Activated T-helper 2 cell treated with anti-CD3 and anti-CD28 coated beads, Interferon-gamma antibody, Interleukin-2, Interleukin-4, amounts not matched to agents 10 μg/mL and 5 μg/mL and 100 μg/mL, durations not matched to agents 14 hours and 24 hours and 36 hours (primary cell): ENCODE measurements at regions of chr1 and their contacts with region 1.

Region 1: GRCh38 chr1:164786980-164787833 is 228.2 kb downstream of the PBX1 start:
- DNase-seq: peak; percentile 41
- H3K4me3 Mint-ChIP-seq: no peak overlapping the region
- H3K27ac Mint-ChIP-seq: no peak overlapping the region
- H3K4me1 Mint-ChIP-seq: no peaks in the 10 kb centered on the region
- H3K27me3 Mint-ChIP-seq: peaks cover 3% of the 10 kb centered on the region

Region 2: GRCh38 chr1:163410073-163410999 is 1376.9 kb before region 1 on chr1:
- intact Hi-C with region 1: loop called (anchors 2 kb)
- DNase-seq: peak; percentile 12
- H3K4me3 Mint-ChIP-seq: no peak overlapping the region
- H3K27ac Mint-ChIP-seq: no peak overlapping the region
- H3K4me1 Mint-ChIP-seq: peaks cover 4% of the 10 kb centered on the region
- H3K27me3 Mint-ChIP-seq: no peaks in the 10 kb centered on the region

Region 3: DNA sequence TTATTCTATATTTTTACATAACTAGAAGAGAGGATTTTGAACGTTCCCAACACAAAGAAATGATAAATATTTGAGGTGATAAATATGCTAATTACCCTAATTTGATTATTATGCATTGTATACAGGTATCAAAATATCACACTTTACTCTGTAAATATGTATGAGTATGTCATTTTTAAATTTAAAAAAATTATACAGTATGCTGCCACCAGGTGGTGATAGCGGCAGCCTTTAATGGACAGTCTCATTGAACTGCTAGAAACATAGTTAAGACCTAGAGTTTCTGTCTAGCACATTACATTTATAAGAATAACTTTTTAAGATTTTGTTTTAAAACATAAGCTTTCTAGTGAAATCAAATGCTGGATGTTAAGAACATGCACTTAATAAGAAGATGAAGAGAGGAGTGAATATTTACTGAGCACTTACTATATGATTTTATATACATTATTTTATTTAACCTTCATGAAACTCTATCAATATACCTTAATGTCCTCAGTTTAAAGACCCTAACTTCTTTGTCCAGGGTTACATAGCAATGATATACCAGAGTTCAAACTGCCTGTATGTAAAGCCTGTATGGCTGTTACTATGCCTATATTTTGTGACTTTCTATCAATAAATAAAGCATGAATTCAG is 1258.4 kb before region 1 on chr1:
- intact Hi-C with region 1: loop called (anchors 10 kb)
- DNase-seq: no peak
- H3K4me3 Mint-ChIP-seq: no peak overlapping the region
- H3K27ac Mint-ChIP-seq: no peak overlapping the region
- H3K4me1 Mint-ChIP-seq: no peaks in the 10 kb centered on the region
- H3K27me3 Mint-ChIP-seq: no peaks in the 10 kb centered on the region

Region 4: GRCh38 chr1:164716992-164717703 is 70.1 kb before region 1 on chr1:
- intact Hi-C with region 1: no loop called
- DNase-seq: no peak
- H3K4me3 Mint-ChIP-seq: no peak overlapping the region
- H3K27ac Mint-ChIP-seq: no peak overlapping the region
- H3K4me1 Mint-ChIP-seq: peaks cover 10% of the 10 kb centered on the region
- H3K27me3 Mint-ChIP-seq: no peaks in the 10 kb centered on the region